WTC11 (cell line): ENCODE measurements at regions of chr3 and their contacts with region 1.

Region 1: DNA sequence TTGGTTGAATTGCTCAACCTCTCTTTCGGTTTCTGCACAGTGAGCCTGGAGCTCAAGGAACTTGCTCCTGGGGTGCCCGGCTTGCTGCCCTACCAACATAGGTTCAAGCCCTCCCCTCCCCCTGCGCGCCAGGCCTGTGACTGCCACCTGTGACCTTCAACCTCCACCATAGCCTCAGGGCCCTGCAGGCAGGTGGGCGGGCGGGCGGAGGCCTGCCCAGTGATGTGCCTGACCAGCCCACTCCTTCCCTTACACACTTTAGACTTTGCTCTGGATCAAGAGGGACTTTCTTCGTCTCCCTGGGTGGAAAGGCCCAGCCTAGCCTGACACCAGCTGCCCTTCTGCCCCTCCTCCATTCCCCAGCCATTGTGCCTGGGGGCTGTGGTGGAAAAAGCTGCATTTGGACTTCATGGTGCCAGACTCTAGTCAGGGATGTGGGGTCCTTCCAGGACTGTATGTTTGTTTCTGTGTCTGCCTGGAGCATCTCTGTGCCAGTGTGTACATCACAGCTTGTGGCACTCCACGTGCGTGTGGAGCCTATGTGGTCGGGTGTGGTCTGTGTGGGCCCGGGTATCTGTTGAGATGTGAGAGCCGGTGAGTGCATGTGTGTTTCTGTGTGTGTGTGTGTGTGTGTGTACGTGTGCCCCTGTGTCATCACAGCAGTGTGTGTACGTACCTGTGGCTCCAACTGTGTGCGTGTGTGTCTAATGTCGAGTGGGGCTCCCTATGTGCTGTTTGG is 9.5 kb downstream of the PRKCD start:
- DNase-seq: no peak
- ATAC-seq: no peak
- H3K4me3 Mint-ChIP-seq: no peak overlapping the region
- H3K27ac Mint-ChIP-seq: peak overlapping the region; percentile 81; the same call in 1 of the 2 replicates
- H3K4me1 Mint-ChIP-seq: peaks cover 55% of the 10 kb centered on the region
- H3K27me3 Mint-ChIP-seq: no peaks in the 10 kb centered on the region
- CTCF ChIP-seq: no peak

Region 2: DNA sequence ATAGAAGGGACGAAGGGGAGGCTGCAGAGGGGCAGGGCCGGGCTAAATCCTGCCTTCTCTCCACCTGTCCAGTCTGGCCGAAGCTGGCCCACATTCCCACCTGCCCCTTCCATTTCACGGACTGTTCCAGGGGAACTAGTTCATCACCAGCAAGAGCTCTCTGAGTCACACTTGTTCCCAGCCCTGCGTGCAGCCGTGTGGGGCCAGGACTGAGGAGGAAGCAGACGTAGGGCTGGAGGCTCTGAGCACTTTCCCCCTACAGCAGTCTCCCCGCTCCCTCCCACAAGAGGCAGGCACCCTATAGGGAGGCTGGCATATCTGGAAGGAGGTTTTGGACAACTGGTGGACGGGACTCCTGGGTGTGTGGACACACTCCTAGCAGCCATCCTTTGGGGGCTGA is 343.1 kb before region 1 on chr3:
- CTCF ChIA-PET with region 1: no interaction called
- POLR2A ChIA-PET with region 1: no interaction called
- DNase-seq: no peak
- ATAC-seq: no peak
- H3K4me3 Mint-ChIP-seq: no peak overlapping the region
- H3K27ac Mint-ChIP-seq: no peak overlapping the region
- H3K4me1 Mint-ChIP-seq: no peaks in the 10 kb centered on the region
- H3K27me3 Mint-ChIP-seq: no peaks in the 10 kb centered on the region
- CTCF ChIP-seq: no peak

Region 3: DNA sequence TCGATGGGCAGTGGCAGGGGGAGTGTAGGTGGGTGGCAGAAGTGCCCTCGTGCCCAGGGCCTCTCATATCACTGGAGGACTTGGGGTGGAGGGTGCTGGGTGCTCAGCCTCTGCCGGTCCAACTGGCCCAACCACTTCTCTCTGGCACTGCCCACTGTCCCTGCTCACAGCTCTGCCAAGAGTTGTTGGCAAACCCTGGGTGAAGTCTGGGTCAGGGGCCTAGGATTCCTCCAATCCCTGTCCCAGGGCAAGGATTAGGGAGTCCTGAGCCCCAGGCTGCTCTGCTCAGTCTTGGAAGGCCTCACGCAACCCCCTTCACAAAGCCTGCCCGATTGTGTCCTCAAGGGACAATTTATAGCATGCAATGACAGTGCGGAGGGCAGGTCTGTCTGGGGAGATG is 14.7 kb before region 1 on chr3:
- CTCF ChIA-PET with region 1: interaction called, 22 read pairs
- POLR2A ChIA-PET with region 1: interaction called, 4 read pairs
- DNase-seq: no peak
- ATAC-seq: no peak
- H3K4me3 Mint-ChIP-seq: no peak overlapping the region
- H3K27ac Mint-ChIP-seq: no peak overlapping the region
- H3K4me1 Mint-ChIP-seq: peaks cover 28% of the 10 kb centered on the region
- H3K27me3 Mint-ChIP-seq: peaks cover 15% of the 10 kb centered on the region
- CTCF ChIP-seq: no peak